ENCODE measurements at regions of chr9 and their contacts with region 1.

Region 1: DNA sequence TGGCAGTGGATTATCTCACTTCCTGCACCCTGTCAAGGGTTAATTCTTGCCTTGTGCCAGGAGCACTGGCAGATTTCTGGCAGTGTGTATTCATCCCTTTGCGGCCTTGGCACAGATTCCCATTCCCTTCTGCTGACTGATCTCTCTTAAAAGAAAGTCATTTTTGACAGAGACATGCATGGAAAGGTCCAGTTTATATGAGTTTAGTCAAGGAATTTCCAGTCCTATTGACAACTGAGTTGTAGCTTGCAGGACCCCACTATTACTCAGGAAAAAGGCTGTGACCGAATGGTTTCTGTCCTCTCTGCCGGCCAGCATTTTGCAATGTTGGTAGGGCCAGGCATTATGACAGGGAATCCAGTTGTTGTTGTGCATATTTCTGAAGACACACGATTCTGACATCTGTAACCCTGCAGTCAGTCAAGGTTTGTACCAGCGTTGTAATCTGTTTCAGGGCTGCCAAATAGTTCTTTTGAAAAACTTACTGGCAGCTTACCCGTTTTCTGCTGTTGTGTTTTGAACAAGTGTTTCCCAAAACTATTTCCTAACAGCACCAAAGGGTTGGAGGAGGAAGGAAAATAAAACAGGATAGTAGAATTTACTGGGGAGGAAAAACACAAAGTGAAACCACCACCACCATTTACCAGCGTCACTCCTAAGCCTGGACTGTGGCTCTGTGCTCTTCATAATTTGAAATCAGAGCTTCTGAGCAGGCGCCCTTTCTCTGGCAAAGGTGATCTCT is 243.4 kb upstream of the KLF4 start:
- DNase-seq: peak; percentile 41 to 64 (median 52)
- H3K4me3 ChIP-seq: peak overlapping the region; percentile 23
- H3K27ac ChIP-seq: peak overlapping the region; percentile 63 to 87
- H3K4me1 ChIP-seq: peaks cover 25% of the 10 kb centered on the region
- H3K27me3 ChIP-seq: no peaks in the 10 kb centered on the region
- CTCF ChIP-seq: no peak
- EP300 ChIP-seq: no peak
- POLR2A ChIP-seq: no peak

Region 2: GRCh38 chr9:107637421-107638420 is 95.2 kb before region 1 on chr9:
- intact Hi-C with region 1: loop called in 2 of 4 experiments (anchors 2 to 10 kb)
- DNase-seq: peak; percentile 94 to 98 (median 96)
- H3K4me3 ChIP-seq: peak overlapping the region; percentile 40
- H3K27ac ChIP-seq: peak overlapping the region; percentile 98 to 100
- H3K4me1 ChIP-seq: peaks cover 12% of the 10 kb centered on the region
- H3K27me3 ChIP-seq: no peaks in the 10 kb centered on the region
- CTCF ChIP-seq: peak in 2 of 3 donors; percentile 66 to 69
- EP300 ChIP-seq: peak; percentile 81
- POLR2A ChIP-seq: peak; percentile 99

Region 3: DNA sequence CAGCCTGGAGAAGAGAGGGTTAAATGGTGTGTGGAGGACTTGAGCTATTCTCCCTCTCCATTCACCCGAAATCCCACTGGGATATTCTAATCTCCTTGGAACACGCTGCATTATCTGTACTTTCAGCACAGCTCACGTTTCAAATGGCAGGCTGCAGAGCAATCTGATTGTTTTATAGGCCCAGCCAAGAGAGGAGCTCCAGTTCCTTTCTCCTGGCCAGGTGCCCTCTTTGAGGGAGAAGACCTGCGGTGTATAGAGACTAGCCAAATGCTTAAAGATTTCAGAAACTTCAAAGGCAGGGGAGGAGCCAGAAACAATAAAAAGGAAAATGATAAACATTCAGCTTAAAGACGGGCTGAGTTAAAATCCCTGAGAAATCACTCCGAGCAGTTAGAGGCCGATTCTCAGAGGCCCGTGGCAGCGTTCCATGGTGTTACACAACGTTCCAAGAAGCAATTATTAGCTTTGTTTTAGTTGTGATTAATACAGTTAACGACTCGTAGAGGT is 320.7 kb after region 1 on chr9:
- intact Hi-C with region 1: loop called in 1 of 4 experiments (anchors 10 kb)
- DNase-seq: peak; percentile 84 to 91 (median 89)
- H3K4me3 ChIP-seq: no peak overlapping the region
- H3K27ac ChIP-seq: peak overlapping the region in 1 of 2 donors; percentile 63
- H3K4me1 ChIP-seq: peaks cover 18% of the 10 kb centered on the region
- H3K27me3 ChIP-seq: no peaks in the 10 kb centered on the region
- CTCF ChIP-seq: no peak
- EP300 ChIP-seq: no peak
- POLR2A ChIP-seq: no peak